Activated CD4-positive, alpha-beta memory T cell treated with anti-CD3 and anti-CD28 coated beads for 36 hours (primary cell): ENCODE measurements at regions of chr1 and their contacts with region 1.

Region 1: GRCh38 chr1:180415985-180416633 is 86.3 kb downstream of the ACBD6 start:
- DNase-seq: no peak
- H3K4me3 Mint-ChIP-seq: no peak overlapping the region
- H3K27ac Mint-ChIP-seq: no peak overlapping the region
- H3K4me1 Mint-ChIP-seq: no peaks in the 10 kb centered on the region
- H3K27me3 Mint-ChIP-seq: no peaks in the 10 kb centered on the region

Region 2: GRCh38 chr1:180188091-180188506 is 228.0 kb before region 1 on chr1:
- CTCF ChIA-PET with region 1: no interaction called
- POLR2A ChIA-PET with region 1: no interaction called
- intact Hi-C with region 1: loop called (anchors 10 kb)
- DNase-seq: peak; percentile 26
- H3K4me3 Mint-ChIP-seq: no peak overlapping the region
- H3K27ac Mint-ChIP-seq: no peak overlapping the region
- H3K4me1 Mint-ChIP-seq: no peaks in the 10 kb centered on the region
- H3K27me3 Mint-ChIP-seq: no peaks in the 10 kb centered on the region

Region 3: DNA sequence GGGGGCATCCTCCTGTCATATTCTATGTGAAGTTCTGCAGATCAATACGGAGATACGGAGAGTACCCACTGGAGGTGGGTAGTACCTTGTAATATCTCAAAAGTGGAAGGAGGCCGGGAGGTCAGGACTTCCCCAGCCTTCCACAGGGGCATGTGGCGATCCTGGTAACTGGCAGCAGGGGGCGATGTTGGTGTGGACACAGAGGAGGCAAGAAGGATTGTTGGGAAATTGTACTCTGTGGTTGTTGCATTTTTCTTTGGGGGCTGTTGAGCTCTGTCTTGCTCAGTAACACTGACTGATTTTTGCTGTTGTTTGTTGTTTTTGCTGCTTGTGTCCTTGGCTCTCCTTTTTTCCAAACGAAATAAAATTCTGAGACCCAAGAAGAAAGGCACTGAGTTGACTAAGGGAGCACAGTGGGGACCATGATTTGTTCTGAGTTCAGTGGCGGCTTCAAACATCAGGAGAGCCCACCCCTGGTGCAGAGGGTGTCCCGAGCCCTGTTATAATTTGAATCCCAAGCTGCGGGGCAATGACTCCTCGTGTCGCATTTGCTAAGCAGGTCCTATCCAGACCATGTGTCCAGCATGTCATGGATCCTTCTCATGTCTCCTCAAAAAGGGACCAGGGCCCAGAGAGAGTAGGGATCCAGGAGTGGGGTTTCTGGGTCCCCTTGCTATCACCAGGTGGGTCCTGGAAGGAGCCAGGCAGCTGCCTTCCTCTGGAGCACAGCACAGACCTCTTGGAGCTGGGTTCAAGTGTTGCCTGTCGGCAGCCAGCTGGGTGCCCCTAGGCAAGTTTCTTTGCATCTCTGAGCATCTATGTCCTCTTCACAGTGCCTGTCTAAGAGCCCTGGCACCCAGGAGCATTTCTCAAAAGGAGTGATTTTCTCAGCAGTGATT is 163.2 kb before region 1 on chr1:
- CTCF ChIA-PET with region 1: interaction called, 18 read pairs
- POLR2A ChIA-PET with region 1: no interaction called
- intact Hi-C with region 1: loop called (anchors 1 kb)
- DNase-seq: peak; percentile 85
- H3K4me3 Mint-ChIP-seq: no peak overlapping the region
- H3K27ac Mint-ChIP-seq: no peak overlapping the region
- H3K4me1 Mint-ChIP-seq: no peaks in the 10 kb centered on the region
- H3K27me3 Mint-ChIP-seq: peaks cover 58% of the 10 kb centered on the region